ENCODE measurements at regions of chr21 and their contacts with region 1.

Region 1: DNA sequence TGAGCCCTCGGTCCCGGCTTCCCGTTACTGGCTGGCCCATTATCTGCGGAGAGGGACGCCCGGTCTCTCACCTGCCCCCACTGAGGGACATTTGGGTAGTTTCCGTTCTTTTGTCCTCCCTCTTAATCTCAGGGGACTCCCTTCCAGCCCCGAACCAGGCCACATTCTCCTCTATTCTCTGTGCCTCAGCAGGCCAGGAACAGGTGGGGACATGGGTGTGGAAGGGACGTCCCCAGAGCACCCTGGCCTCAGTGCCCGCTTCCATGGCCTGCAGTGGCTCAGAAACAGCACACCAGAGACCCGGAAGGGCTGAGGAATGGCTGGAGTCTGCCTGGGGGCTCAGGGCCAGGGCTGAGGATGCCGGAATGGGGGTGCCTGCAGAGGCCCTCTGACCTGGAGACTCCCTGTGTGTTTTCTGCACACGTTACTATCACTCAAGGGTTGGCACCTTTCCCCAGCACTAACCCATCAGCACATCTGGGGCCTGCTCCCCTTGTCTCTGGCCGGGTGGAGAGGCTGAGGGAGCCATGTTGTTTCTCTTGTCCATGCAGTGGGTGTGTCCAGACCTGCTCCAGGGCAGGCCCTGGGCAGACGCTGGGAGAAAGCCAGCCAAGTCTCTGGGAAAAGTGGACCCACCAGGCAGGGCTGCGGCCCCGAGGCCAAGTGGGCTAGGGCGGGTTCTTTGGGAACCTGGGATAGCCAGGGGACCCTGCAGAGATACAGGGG is 10.0 kb upstream of the DNMT3L start:
- DNase-seq: no peak
- ATAC-seq: no peak
- H3K4me3 Mint-ChIP-seq: no peak overlapping the region
- H3K27ac Mint-ChIP-seq: no peak overlapping the region
- H3K4me1 Mint-ChIP-seq: no peaks in the 10 kb centered on the region
- H3K27me3 Mint-ChIP-seq: no peaks in the 10 kb centered on the region

Region 2: GRCh38 chr21:44291936-44292811 is 20.5 kb after region 1 on chr21:
- CTCF ChIA-PET with region 1: interaction called, 5 read pairs
- POLR2A ChIA-PET with region 1: no interaction called
- intact Hi-C with region 1: loop called (anchors 2 kb)
- DNase-seq: no peak
- ATAC-seq: no peak
- H3K4me3 Mint-ChIP-seq: no peak overlapping the region
- H3K27ac Mint-ChIP-seq: no peak overlapping the region
- H3K4me1 Mint-ChIP-seq: peaks cover 8% of the 10 kb centered on the region
- H3K27me3 Mint-ChIP-seq: no peaks in the 10 kb centered on the region

Measured in activated CD4-positive, alpha-beta T cell treated with anti-CD3 and anti-CD28 coated beads for 36 hours (primary cell).